Colonic mucosa (tissue), 4 donors: ENCODE measurements at regions of chr4 and their contacts with region 1.

Region 1: GRCh38 chr4:83639849-83640493 is 104.1 kb downstream of the GPAT3 start:
- DNase-seq: peak; percentile 80
- H3K4me3 ChIP-seq: no peak overlapping the region
- H3K27ac ChIP-seq: no peak overlapping the region
- H3K4me1 ChIP-seq: no peaks in the 10 kb centered on the region
- H3K27me3 ChIP-seq: no peaks in the 10 kb centered on the region
- CTCF ChIP-seq: peak; percentile 83

Region 2: GRCh38 chr4:83369831-83370639 is 269.9 kb before region 1 on chr4:
- intact Hi-C with region 1: no loop called
- DNase-seq: no peak
- H3K4me3 ChIP-seq: no peak overlapping the region
- H3K27ac ChIP-seq: no peak overlapping the region
- H3K4me1 ChIP-seq: no peaks in the 10 kb centered on the region
- H3K27me3 ChIP-seq: no peaks in the 10 kb centered on the region
- CTCF ChIP-seq: no peak

Region 3: GRCh38 chr4:83503974-83504373 is 136.0 kb before region 1 on chr4:
- intact Hi-C with region 1: loop called (anchors 2 kb)
- DNase-seq: no peak
- H3K4me3 ChIP-seq: no peak overlapping the region
- H3K27ac ChIP-seq: no peak overlapping the region
- H3K4me1 ChIP-seq: no peaks in the 10 kb centered on the region
- H3K27me3 ChIP-seq: no peaks in the 10 kb centered on the region
- CTCF ChIP-seq: no peak

Region 4: DNA sequence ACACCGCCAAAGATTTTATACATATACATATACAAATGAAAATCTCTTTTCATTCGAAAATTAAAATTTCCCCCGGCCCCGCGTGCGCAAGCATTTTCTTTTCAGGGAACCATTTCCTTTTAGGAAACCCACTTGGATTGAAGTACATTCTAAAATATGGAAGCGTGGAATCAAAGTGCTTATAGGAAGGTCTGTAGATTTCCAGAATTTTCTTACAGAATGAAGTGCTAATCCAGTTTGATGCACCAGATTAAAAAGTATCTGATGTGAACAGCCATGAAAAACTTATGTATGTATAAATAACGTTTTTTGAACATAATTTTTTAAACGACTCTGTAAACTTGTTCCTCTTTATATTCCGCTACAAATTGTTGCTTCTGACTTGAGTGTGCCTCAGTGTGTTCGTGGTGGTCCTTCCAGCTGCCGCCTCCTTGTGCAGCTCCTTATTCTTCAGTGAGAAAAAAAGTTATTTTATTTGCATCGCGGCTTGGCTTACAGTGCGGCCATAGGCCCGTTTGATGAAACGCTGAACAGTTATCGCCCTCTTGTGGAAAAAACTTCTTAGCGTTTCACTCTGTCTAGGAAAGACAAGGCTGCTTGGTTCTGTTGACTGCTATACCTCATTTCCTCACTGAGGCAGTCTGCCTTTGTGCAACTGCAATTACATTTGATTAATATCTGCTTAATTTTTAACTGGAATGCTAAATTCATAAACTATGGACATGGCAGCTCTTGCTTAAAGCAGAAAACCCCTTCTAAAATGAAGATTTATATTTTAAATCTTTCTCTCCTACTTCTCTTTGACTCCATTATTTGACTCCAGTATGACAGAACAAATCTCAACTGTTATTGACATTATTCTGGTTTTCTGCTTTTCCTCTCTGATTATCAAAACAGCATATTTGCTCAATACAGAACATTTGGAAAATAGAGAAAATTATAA is 863.8 kb after region 1 on chr4:
- intact Hi-C with region 1: loop called (anchors 5 kb)
- DNase-seq: no peak
- H3K4me3 ChIP-seq: no peak overlapping the region
- H3K27ac ChIP-seq: no peak overlapping the region
- H3K4me1 ChIP-seq: peaks cover 11% of the 10 kb centered on the region
- H3K27me3 ChIP-seq: peaks cover 58% of the 10 kb centered on the region
- CTCF ChIP-seq: peak; percentile 60